ENCODE measurements at regions of chr1 and their contacts with region 1.

Region 1: GRCh38 chr1:84781946-84782771 is 91.9 kb upstream of the SSX2IP start:
- DNase-seq: peak; percentile 69 to 85 (median 83)
- ATAC-seq: peak; percentile 67 to 74
- H3K4me3 ChIP-seq: no peak overlapping the region
- H3K27ac ChIP-seq: no peak overlapping the region
- H3K4me1 ChIP-seq: no peaks in the 10 kb centered on the region
- H3K27me3 ChIP-seq: no peaks in the 10 kb centered on the region

Region 2: DNA sequence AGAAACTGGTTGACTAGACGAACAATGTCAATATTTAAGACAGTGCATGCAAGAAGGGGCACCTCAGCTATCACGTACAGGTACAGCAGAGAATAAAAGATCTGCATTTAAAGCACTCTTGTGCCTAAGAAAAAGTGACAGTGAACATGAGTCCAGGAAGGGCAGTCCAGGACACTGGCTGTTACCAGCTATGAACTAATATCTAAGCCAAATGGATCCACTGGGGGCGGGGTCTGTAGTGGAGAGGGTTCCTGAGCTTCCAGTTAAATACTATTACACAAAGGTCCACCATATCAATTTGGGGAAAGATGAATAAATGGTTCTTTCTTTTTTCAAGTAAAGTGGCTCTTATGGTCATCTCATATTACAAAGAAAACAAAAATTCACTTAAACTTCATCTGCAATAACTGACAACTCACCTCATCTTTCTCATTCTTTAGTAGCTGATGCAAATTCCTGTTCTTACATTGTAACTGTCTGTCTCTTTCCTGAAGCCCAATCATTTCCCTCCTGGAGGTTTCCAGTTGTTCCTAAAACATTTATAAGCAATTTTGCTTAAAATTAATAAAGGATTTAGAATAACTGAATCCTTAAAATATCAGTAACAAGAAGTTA is 116.3 kb before region 1 on chr1:
- intact Hi-C with region 1: no loop called
- DNase-seq: no peak
- ATAC-seq: no peak
- H3K4me3 ChIP-seq: no peak overlapping the region
- H3K27ac ChIP-seq: no peak overlapping the region
- H3K4me1 ChIP-seq: no peaks in the 10 kb centered on the region
- H3K27me3 ChIP-seq: no peaks in the 10 kb centered on the region

Region 3: DNA sequence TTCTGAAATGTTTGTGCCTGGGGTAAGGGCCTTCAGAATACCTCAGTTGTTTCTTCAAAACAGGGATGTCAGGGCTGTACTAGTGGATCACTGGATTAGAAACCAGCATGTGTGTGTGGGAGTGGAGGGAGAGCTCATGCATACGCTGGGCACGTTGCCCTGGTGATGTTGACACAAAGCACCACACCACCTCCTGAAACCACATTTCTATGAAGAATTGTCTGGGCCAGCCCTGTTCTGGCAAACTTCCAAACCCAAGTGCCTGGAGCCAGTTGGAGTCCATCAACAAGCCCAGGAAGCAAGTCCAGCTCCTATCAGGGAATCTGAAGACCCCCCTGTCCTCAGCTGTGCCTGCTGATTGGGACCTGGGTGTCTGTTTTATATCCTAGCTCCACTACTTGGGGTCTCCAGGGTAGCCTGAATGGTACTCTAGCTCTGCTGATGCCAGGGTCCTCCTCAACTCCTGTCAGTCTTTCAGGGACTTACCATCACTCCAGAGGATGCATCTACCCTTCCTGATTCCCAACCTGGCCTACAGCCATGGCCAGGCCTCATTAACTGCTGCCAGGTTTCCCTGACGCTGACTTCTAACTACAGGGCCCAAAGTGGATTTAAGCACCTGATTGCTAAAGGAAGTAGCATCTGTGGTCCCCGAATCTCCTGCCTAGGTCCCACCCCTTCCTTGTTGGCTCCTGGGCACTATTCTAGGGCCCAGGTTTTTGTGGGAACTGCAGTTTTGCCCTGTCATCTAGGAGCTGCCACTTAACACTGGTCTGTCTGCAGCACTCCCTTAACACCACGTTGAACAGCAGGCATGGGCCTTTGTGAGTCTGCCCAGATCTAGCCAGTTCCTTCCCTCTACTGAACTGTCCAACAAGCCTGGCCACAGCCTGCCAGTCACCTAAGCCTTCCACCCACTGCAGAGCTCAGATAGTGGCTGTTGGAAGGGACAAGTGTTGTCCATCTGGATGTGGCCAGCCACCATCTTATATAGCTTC is 65.4 kb after region 1 on chr1:
- intact Hi-C with region 1: no loop called
- DNase-seq: peak; percentile 71 to 88 (median 82)
- ATAC-seq: peak; percentile 80 to 85
- H3K4me3 ChIP-seq: no peak overlapping the region
- H3K27ac ChIP-seq: peak overlapping the region; percentile 90
- H3K4me1 ChIP-seq: peaks cover 12% of the 10 kb centered on the region
- H3K27me3 ChIP-seq: no peaks in the 10 kb centered on the region

Region 4: GRCh38 chr1:84892705-84893618 is 110.8 kb after region 1 on chr1 and contains the start of gene LPAR3:
- intact Hi-C with region 1: loop called in 1 of 4 experiments (anchors 10 kb)
- DNase-seq: peak; percentile 45 to 82 (median 79)
- ATAC-seq: peak; percentile 86 to 90
- H3K4me3 ChIP-seq: peak within 1 kb of the TSS; percentile 58
- H3K27ac ChIP-seq: peak within 1 kb of the TSS; percentile 43
- H3K4me1 ChIP-seq: no peaks in the 10 kb centered on the region
- H3K27me3 ChIP-seq: no peaks in the 10 kb centered on the region
- total RNA-seq, gene LPAR3: 40.0 to 51.8 (median 47.6) TPM

Region 5: DNA sequence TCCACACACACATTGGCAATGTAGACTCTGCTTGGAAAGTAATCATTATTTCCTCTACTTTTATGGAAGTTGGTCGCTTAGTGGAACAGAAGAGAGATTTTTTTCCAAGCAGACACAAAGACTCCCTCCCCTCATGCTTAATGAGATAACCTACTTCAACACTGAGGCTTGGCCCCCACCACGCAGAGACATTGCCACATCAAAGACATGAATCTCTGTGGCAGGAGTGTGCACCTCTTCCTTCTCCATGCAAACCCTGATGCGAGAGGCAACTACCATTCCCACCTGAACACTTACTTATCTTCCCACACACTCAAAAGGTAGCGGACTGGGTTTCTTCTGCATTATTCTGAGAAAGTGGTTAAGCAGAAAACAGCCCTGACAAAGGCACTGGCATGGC is 148.2 kb after region 1 on chr1:
- intact Hi-C with region 1: loop called in 3 of 4 experiments (anchors 5 to 10 kb)
- DNase-seq: no peak
- ATAC-seq: no peak
- H3K4me3 ChIP-seq: no peak overlapping the region
- H3K27ac ChIP-seq: no peak overlapping the region
- H3K4me1 ChIP-seq: no peaks in the 10 kb centered on the region
- H3K27me3 ChIP-seq: no peaks in the 10 kb centered on the region

Region 6: GRCh38 chr1:84936116-84936810 is 154.1 kb after region 1 on chr1:
- intact Hi-C with region 1: loop called in 3 of 4 experiments (anchors 5 to 10 kb)
- DNase-seq: no peak
- ATAC-seq: peak; percentile 73 to 74
- H3K4me3 ChIP-seq: no peak overlapping the region
- H3K27ac ChIP-seq: no peak overlapping the region
- H3K4me1 ChIP-seq: no peaks in the 10 kb centered on the region
- H3K27me3 ChIP-seq: no peaks in the 10 kb centered on the region